Heart left ventricle (tissue), 16 donors: ENCODE measurements at regions of chr12 and their contacts with region 1.

Region 1: DNA sequence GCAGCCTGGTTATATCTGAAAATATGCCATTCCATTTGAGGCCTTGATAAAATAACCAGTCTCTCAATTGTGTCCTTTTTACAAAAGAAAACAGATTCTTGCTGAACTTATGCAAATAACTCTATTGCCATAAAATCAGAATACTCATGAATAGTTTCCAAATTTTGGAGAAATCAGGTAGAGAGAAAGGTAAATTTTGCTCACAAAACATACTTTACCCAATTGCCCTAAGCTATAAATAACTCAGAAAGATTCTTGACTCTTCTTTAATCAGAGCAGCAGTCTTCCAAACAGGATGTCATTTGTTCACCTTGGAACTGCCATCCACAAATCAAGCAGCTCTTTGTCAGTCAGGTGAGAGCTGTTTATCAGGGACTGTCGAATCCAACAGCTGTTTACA is 12.6 kb downstream of the ZNF26 start:
- DNase-seq: no peak
- ATAC-seq: no peak
- H3K4me3 ChIP-seq: no peak overlapping the region
- H3K27ac ChIP-seq: no peak overlapping the region
- H3K4me1 ChIP-seq: no peaks in the 10 kb centered on the region
- H3K27me3 ChIP-seq: no peaks in the 10 kb centered on the region
- CTCF ChIP-seq: no peak
- POLR2A ChIP-seq: no peak

Region 2: DNA sequence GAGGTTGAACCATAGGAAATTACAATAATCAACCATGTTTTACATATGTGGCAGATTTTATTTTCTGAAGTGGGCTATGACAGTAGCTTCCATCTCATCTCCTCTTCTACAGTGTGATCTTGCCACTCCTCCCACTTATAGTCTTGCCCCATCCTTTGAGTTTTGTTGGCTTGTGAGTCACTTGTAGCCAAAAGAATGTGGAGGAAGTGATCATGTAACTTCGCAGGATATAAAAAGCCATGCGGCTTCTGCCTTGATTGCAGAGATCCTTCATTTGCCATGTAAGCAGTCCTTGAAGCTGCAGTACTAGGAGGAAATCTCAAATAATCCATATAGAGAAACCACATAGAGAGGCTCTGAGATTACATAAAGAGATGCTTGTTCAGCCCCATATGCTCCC is 24.8 kb after region 1 on chr12:
- intact Hi-C with region 1: loop called in 1 of 10 experiments (anchors 2 kb)
- DNase-seq: no peak
- ATAC-seq: no peak
- H3K4me3 ChIP-seq: no peak overlapping the region
- H3K27ac ChIP-seq: no peak overlapping the region
- H3K4me1 ChIP-seq: no peaks in the 10 kb centered on the region
- H3K27me3 ChIP-seq: no peaks in the 10 kb centered on the region
- CTCF ChIP-seq: no peak
- POLR2A ChIP-seq: no peak